Aorta (tissue), 5 donors: ENCODE measurements at regions of chrX and their contacts with region 1.

Region 1: DNA sequence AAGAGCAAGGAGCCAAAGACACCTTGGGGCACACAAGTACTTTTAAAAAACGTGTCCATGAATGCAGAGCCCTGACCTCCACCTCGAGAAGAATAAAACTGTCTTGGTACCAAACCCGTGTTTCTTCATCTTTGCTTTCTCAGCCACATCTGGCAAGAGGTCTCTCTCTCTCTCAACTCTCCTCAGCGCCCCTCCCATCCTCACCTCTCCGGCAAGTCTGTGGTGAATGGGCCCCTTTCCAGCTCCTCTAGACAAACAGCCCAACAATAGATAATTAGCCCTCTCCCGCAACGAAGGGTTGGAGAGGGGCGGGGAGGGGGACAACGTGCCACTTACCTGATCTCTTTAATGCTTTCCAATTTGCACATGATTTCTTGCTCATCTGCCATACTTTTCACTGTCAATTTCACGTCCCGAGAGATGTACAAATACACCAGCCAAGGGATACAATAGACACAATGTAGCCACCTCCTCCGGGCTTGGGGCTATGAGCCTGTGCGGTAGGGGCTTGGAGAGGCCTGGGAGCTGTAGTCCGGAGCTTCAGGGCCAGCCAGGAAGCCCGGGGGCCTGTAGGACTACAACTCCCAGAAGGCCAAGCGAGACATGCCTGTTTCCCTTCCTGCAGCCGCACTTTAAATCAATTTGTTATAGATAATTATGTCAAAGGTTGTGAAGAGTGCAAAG is at the start of gene ZC4H2:
- DNase-seq: peak; percentile 82 to 87
- ATAC-seq: peak; percentile 90
- H3K4me3 ChIP-seq: peak within 1 kb of the TSS; percentile 82 to 86
- H3K27ac ChIP-seq: no peak within 1 kb of the TSS
- H3K4me1 ChIP-seq: no peaks in the 10 kb centered on the region
- H3K27me3 ChIP-seq: no peaks in the 10 kb centered on the region
- total RNA-seq, gene ZC4H2: 9.2 to 10.4 TPM

Region 2: DNA sequence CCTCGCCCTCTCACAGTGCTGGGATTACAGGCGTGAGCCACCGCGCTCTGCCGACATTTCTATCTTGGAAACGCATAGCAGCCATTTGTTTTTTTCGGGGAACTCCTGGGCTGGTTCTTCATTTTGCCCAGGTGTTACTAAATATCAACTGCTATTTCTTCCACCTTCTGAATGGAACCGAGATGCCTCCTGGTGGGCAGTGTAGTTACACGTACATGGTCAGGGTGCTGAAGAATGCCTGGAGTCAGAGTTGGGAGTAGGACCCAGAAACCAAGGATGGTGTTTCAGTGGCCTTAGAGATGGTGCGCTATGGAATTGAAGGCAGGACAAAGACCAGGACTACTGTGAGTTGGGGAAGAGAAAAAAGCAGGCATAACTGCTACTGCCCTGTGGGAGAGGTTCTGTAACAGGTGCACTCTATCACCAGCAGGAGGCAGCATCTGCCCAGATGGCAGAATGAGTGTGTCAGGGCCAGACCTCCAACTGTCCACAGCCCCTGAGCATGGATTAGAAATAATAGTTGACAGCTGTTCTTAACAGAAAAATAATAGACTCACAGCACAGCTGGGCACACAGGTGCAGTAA is 81.6 kb before region 1 on chrX:
- intact Hi-C with region 1: no loop called
- DNase-seq: no peak
- ATAC-seq: no peak
- H3K4me3 ChIP-seq: no peak overlapping the region
- H3K27ac ChIP-seq: no peak overlapping the region
- H3K4me1 ChIP-seq: no peaks in the 10 kb centered on the region
- H3K27me3 ChIP-seq: no peaks in the 10 kb centered on the region

Region 3: GRCh38 chrX:64908121-64908520 is 68.0 kb before region 1 on chrX:
- intact Hi-C with region 1: no loop called
- DNase-seq: no peak
- ATAC-seq: no peak
- H3K4me3 ChIP-seq: no peak overlapping the region
- H3K27ac ChIP-seq: no peak overlapping the region
- H3K4me1 ChIP-seq: no peaks in the 10 kb centered on the region
- H3K27me3 ChIP-seq: no peaks in the 10 kb centered on the region

Region 4: GRCh38 chrX:65034668-65035445 is 58.7 kb after region 1 on chrX:
- intact Hi-C with region 1: loop called in 1 of 2 experiments (anchors 5 kb)
- DNase-seq: peak; percentile 81 to 93
- ATAC-seq: peak; percentile 92
- H3K4me3 ChIP-seq: peak within 1 kb of the TSS; percentile 24 to 55
- H3K27ac ChIP-seq: peak within 1 kb of the TSS in 1 of 2 donors; percentile 73
- H3K4me1 ChIP-seq: peaks cover 0 to 2% of the 10 kb centered on the region in 2 donors
- H3K27me3 ChIP-seq: no peaks in the 10 kb centered on the region